ENCODE measurements at regions of chr21 and their contacts with region 1.

Region 1: GRCh38 chr21:14215971-14216641 is at the start of gene RBM11:
- DNase-seq: peak; percentile 43 to 87 (median 75)
- ATAC-seq: peak; percentile 97
- H3K4me3 ChIP-seq: peak within 1 kb of the TSS; percentile 71 to 89
- H3K4me3 Mint-ChIP-seq: peak within 1 kb of the TSS; percentile 88
- H3K27ac ChIP-seq: peak within 1 kb of the TSS; percentile 54 to 60
- H3K27ac Mint-ChIP-seq: peak within 1 kb of the TSS; percentile 71
- H3K4me1 ChIP-seq: peaks cover 6% of the 10 kb centered on the region
- H3K4me1 Mint-ChIP-seq: peaks cover 11% of the 10 kb centered on the region
- H3K27me3 ChIP-seq: no peaks in the 10 kb centered on the region
- H3K27me3 Mint-ChIP-seq: peaks cover 7% of the 10 kb centered on the region
- CTCF ChIP-seq: no peak
- total RNA-seq, gene RBM11: 12.6 to 15.7 TPM

Region 2: GRCh38 chr21:14382835-14383594 is 166.9 kb after region 1 on chr21 and contains the start of gene HSPA13:
- CTCF ChIA-PET with region 1: no interaction called
- POLR2A ChIA-PET with region 1: no interaction called
- intact Hi-C with region 1: loop called (anchors 1 to 5 kb)
- DNase-seq: peak; percentile 97 to 100 (median 99)
- ATAC-seq: peak; percentile 91
- H3K4me3 ChIP-seq: peak within 1 kb of the TSS; percentile 65 to 92
- H3K4me3 Mint-ChIP-seq: peak within 1 kb of the TSS; percentile 100
- H3K27ac ChIP-seq: peak within 1 kb of the TSS; percentile 94 to 96
- H3K27ac Mint-ChIP-seq: peak within 1 kb of the TSS; percentile 100
- H3K4me1 ChIP-seq: peaks cover 24% of the 10 kb centered on the region
- H3K4me1 Mint-ChIP-seq: peaks cover 40% of the 10 kb centered on the region
- H3K27me3 ChIP-seq: no peaks in the 10 kb centered on the region
- H3K27me3 Mint-ChIP-seq: no peaks in the 10 kb centered on the region
- CTCF ChIP-seq: no peak
- total RNA-seq, gene HSPA13: 54.3 to 58.1 TPM

Measured in CD8-positive, alpha-beta T cell (primary cell).